ENCODE measurements at regions of chr6 and their contacts with region 1.

Region 1: DNA sequence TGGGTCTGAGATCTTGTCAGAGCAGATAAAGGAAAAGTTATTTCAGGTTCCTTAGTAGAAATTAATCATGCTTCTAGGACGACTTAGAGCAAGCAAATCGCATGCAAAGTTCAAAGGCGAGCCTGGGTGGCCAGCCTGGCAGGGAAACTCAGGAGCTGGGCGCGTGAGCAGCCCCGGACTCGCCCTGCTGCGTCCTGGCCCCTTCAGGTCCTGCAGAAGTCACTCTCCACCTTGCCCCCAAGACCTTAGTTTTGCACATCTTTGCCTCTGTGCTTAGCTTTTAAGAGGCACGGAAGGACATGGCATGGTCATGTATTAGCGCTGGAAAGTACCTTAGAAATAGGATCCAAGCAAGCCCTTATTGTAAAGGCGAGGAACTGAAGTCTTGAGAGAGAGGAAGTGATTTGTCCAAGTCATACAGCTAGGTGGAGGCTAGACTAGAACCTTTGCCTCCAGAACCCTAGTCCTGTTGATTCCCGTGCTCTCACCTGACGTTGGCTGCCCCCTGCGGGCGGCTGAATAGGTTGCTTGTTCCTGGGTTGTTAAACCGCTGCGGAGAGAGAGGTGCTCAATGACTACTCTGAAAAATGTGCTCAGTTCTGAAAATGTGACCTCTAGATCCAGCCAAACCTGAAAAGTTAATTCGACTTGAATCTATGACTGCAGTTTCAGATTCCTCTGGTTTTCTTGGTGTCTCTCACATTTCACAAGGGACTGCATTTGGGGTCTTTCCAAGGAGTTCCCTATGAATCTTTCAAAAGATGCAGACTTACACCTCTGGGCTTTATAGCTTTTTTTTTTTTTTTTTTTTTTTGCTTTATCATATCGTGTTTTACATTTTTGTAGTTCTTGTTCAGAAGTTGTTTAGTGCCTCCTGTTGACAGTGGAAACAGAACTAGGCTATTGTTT is 2.7 kb downstream of the MYB start:
- DNase-seq: peak; percentile 40 to 62
- H3K4me3 ChIP-seq: peak overlapping the region; percentile 68
- H3K27ac ChIP-seq: no peak overlapping the region
- H3K4me1 ChIP-seq: peaks cover 28% of the 10 kb centered on the region
- H3K27me3 ChIP-seq: peaks cover 23% of the 10 kb centered on the region
- CTCF ChIP-seq: peak; percentile 72

Region 2: GRCh38 chr6:134994431-134994830 is 189.4 kb before region 1 on chr6:
- CTCF ChIA-PET with region 1: no interaction called
- POLR2A ChIA-PET with region 1: interaction called, 11 read pairs
- intact Hi-C with region 1: no loop called
- DNase-seq: no peak
- H3K4me3 ChIP-seq: no peak overlapping the region
- H3K27ac ChIP-seq: no peak overlapping the region
- H3K4me1 ChIP-seq: no peaks in the 10 kb centered on the region
- H3K27me3 ChIP-seq: no peaks in the 10 kb centered on the region
- CTCF ChIP-seq: no peak

Region 3: GRCh38 chr6:135145063-135145800 is 38.6 kb before region 1 on chr6:
- CTCF ChIA-PET with region 1: no interaction called
- POLR2A ChIA-PET with region 1: no interaction called
- intact Hi-C with region 1: loop called (anchors 2 kb)
- DNase-seq: peak in 1 of 2 experiments; percentile 3
- H3K4me3 ChIP-seq: no peak overlapping the region
- H3K27ac ChIP-seq: no peak overlapping the region
- H3K4me1 ChIP-seq: no peaks in the 10 kb centered on the region
- H3K27me3 ChIP-seq: peaks cover 16% of the 10 kb centered on the region
- CTCF ChIP-seq: peak; percentile 94

Region 4: DNA sequence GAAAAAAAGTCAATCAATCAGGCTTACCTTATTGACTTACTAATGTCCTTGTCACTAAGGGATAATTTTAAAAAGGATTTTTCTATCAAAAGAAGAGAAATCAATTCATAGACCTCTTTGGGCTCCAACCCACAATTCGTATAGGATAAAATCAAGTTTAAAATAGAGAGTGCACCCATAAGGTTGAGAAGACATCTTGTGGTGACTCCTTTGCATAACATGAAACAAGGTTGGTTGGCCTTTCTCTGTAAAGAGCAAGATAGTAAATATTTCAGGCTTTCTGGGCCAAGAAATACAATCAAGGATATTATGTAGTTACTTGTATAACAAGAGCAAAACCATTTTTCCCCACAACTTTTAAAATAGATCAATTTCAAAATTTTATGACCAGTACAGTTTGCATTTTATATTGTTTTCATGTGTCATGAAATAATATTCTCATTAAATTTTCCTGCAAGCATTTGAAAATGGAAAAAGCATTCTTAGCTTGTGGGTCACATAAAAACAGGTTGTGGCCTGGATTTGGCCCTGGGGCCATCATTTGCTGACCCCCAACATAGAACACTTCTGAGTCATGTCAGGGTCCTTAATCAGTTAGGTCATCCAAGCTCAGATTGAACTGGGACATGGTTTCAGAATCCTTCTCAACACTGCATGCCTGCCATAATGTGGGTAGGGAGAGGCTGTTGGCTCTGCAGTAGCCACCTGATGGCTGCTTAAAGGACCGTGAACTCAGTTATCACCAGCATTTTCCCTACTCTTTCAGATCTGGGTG is 74.0 kb after region 1 on chr6:
- CTCF ChIA-PET with region 1: no interaction called
- POLR2A ChIA-PET with region 1: interaction called, 4 read pairs
- intact Hi-C with region 1: loop called (anchors 2 kb)
- DNase-seq: peak in 1 of 2 experiments; percentile 44
- H3K4me3 ChIP-seq: no peak overlapping the region
- H3K27ac ChIP-seq: no peak overlapping the region
- H3K4me1 ChIP-seq: peaks cover 19% of the 10 kb centered on the region
- H3K27me3 ChIP-seq: peaks cover 85% of the 10 kb centered on the region
- CTCF ChIP-seq: peak; percentile 47; the same call in 1 of the 2 replicates

Region 5: GRCh38 chr6:135722679-135723078 is 538.9 kb after region 1 on chr6:
- CTCF ChIA-PET with region 1: no interaction called
- POLR2A ChIA-PET with region 1: no interaction called
- intact Hi-C with region 1: no loop called
- DNase-seq: peak; percentile 23 to 89
- H3K4me3 ChIP-seq: peak overlapping the region; percentile 13; the same call in 1 of the 2 replicates
- H3K27ac ChIP-seq: peak overlapping the region; percentile 71
- H3K4me1 ChIP-seq: peaks cover 23% of the 10 kb centered on the region
- H3K27me3 ChIP-seq: no peaks in the 10 kb centered on the region
- CTCF ChIP-seq: no peak